ENCODE measurements at regions of chrX and their contacts with region 1.

Region 1: DNA sequence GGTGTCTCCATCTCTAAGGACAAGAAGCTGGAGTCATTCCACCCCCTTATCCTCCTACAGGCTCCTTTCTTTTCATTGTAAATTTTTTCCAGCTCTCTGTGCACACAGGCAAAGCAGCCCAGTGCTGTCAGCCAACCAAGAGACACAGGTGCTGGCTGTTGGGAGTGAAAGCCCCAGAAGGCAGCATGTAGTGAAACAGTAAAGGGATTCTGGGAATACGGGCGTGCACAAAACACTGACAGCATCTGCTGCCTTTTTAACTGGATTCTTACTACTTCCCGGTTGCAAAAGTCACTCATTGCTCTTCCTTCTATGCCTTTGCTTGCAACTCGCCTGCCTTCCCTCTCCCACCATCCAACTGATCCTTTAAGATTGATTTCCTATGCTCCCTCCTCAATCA is 208.6 kb upstream of the PRPS2 start:
- DNase-seq: peak in 1 of 10 donors; percentile 37
- H3K4me3 ChIP-seq: no peak overlapping the region
- H3K27ac ChIP-seq: peak overlapping the region in 1 of 59 donors; percentile 17
- H3K27me3 ChIP-seq: peaks cover 0 to 49% (median 3%) of the 10 kb centered on the region in 45 donors
- CTCF ChIP-seq: no peak

Region 2: DNA sequence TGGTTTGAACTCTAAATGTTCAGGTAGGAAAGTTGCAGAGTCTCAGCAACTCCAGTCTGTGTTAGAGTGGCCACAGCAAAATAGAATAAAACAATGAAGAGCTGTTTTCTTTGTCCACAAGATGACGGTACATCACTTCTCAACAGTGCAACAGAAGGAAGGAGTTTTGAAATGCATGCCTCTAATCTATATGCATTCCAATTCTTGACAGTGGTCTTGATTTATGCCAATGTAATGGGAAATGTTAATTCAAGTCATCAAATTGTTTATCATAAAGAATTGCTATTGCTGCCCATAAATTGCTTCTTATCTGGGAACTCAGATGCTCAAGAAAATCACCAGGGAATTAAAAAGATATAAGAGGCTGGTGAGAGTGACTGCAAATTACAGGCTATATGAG is 13.1 kb after region 1 on chrX:
- intact Hi-C with region 1: loop called in 1 of 2 experiments (anchors 1 kb)
- DNase-seq: no peak
- H3K4me3 ChIP-seq: no peak overlapping the region
- H3K27ac ChIP-seq: no peak overlapping the region
- H3K27me3 ChIP-seq: peaks cover 0 to 44% (median 5%) of the 10 kb centered on the region in 45 donors
- CTCF ChIP-seq: no peak